ENCODE measurements at regions of chr17 and their contacts with region 1.

Region 1: DNA sequence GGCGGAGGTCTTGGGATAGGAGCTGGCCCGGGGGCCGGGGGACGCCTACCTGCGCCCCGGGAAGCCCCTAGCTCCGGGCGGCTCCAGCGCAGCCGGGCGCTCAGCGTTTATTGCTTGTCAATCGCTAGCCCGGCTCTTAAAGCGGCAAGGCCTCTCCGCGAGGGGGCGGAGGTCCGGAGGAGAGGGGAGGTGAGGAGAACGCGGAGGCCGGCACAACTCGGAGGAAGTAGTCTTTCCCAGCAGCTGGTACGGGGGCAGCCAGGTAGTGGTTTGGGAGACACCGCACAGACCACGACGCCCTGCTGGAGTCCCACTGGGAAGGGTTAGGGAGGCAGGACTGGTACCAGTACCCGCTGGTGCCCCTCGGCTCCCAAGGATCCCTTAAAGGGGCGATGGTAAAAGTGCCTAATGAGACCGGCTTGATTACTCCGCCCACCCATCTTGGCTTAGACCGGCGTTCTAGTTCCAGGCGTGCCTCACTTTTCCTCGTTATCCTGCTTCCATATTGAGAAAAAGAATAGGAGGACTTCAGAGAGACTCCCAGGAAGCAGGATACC is at the start of gene MPP2:
- DNase-seq: peak; percentile 55
- H3K4me3 ChIP-seq: peak within 1 kb of the TSS in 1 of 3 experiments; percentile 26
- H3K27ac ChIP-seq: no peak within 1 kb of the TSS
- H3K4me1 ChIP-seq: peaks cover 3% of the 10 kb centered on the region
- H3K27me3 ChIP-seq: peaks cover 44 to 51% of the 10 kb centered on the region in 2 experiments
- CTCF ChIP-seq: peak in 1 of 2 donors; percentile 23
- POLR2A ChIP-seq: no peak
- total RNA-seq, gene MPP2: 1.2 and 1.6 TPM in 2 replicates

Region 2: DNA sequence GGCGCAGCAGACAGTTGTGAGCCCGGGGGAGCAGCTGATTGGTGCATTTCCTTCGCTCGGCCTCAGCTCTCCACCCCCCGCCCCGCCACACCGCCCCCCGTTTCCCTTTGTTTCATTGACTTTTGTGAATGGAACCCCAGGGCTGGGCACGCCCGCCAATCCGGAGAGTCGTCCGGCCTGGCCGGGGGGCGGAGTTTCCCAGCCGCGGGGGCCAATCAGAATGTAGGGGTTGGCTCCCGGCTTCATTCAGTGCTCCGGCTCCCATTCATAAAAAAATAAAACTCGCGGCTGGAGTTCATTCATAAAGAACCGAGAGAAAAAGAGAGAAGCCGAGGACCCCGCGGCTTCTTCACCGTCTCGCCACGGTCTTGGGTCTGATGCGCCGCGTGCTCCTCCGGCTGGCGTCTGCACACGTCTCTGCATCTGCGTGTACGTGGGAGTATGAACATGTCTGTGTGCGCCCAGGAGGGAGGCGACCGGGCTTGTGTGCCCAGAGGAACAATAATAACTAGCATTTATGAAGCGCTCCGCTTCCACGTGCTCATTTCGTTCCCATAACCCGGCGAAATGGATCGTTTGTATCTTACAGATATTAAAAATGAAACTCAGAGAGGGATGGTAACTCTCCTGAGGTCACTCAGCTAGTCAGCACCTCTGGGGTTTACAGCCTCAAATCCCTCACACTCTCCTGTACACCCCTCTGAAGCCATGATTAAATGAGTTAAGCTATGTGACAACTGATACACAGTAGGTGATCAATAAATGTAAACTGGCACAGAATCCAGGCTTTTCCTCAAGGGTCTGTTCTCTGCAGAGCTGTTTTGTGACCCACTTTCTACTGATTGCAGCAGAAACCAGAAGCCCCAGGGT is 360.9 kb before region 1 on chr17 and contains the start of gene ETV4:
- CTCF ChIA-PET with region 1: no interaction called
- POLR2A ChIA-PET with region 1: no interaction called
- dilution Hi-C with region 1: no loop called
- intact Hi-C with region 1: no loop called
- DNase-seq: peak; percentile 95
- H3K4me3 ChIP-seq: peak within 1 kb of the TSS; percentile 28 to 75 (median 56)
- H3K27ac ChIP-seq: peak within 1 kb of the TSS; percentile 90
- H3K4me1 ChIP-seq: peaks cover 23% of the 10 kb centered on the region
- H3K27me3 ChIP-seq: no peaks in the 10 kb centered on the region
- CTCF ChIP-seq: no peak
- POLR2A ChIP-seq: no peak
- total RNA-seq, gene ETV4: 32.2 and 39.4 TPM in 2 replicates

Region 3: GRCh38 chr17:43920500-43921095 is 13.1 kb after region 1 on chr17:
- CTCF ChIA-PET with region 1: interaction called, 43 read pairs
- POLR2A ChIA-PET with region 1: no interaction called
- dilution Hi-C with region 1: no loop called
- intact Hi-C with region 1: no loop called
- DNase-seq: no peak
- H3K4me3 ChIP-seq: no peak overlapping the region
- H3K27ac ChIP-seq: no peak overlapping the region
- H3K4me1 ChIP-seq: no peaks in the 10 kb centered on the region
- H3K27me3 ChIP-seq: peaks cover 33 to 39% of the 10 kb centered on the region in 2 experiments
- CTCF ChIP-seq: no peak
- POLR2A ChIP-seq: no peak

Region 4: DNA sequence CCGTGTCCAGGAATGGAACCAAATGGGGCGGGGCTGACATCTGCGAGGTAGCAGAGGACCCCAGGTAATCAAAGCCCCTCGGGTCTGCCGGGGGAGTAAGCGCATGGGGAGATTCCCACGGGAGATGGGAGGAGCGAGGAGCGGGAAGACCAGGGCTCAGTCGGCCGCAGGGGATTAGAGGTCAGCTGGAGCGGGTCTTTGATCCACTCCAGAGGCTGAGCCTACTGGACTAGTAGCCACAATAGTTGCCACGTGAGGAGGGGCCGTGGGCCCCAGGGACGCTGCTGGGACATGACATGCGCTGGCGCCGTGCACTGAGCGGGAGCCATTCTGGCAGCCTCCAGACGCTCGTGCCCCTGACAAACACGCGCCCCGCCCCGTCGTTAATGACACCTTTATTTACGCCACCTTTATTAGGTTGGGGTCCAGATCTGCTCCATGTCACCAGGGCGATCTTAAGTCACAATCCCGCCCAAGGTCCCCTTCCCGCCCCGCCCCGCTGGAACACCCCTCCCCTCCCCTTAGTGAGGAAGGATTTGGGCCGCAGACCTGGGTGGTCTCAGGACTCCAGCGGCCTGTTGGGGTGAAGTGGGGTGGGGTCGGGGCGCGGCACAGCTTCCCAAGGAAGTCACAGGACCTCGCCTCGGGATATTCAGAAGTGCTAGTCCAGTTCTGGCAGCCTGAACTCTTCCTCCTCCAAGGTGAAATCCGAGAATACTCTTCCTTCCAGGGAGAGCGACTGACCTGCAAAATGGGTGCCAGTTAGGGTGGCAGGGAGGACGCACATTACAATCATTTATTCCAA is 19.8 kb after region 1 on chr17:
- CTCF ChIA-PET with region 1: interaction called, 43 read pairs
- POLR2A ChIA-PET with region 1: no interaction called
- dilution Hi-C with region 1: no loop called
- intact Hi-C with region 1: no loop called
- DNase-seq: no peak
- H3K4me3 ChIP-seq: no peak overlapping the region
- H3K27ac ChIP-seq: no peak overlapping the region
- H3K4me1 ChIP-seq: no peaks in the 10 kb centered on the region
- H3K27me3 ChIP-seq: peaks cover 44 to 45% of the 10 kb centered on the region in 2 experiments
- CTCF ChIP-seq: no peak
- POLR2A ChIP-seq: no peak

Measured in endothelial cell of umbilical vein (primary cell).